ENCODE measurements at regions of chr2 and their contacts with region 1.

Region 1: DNA sequence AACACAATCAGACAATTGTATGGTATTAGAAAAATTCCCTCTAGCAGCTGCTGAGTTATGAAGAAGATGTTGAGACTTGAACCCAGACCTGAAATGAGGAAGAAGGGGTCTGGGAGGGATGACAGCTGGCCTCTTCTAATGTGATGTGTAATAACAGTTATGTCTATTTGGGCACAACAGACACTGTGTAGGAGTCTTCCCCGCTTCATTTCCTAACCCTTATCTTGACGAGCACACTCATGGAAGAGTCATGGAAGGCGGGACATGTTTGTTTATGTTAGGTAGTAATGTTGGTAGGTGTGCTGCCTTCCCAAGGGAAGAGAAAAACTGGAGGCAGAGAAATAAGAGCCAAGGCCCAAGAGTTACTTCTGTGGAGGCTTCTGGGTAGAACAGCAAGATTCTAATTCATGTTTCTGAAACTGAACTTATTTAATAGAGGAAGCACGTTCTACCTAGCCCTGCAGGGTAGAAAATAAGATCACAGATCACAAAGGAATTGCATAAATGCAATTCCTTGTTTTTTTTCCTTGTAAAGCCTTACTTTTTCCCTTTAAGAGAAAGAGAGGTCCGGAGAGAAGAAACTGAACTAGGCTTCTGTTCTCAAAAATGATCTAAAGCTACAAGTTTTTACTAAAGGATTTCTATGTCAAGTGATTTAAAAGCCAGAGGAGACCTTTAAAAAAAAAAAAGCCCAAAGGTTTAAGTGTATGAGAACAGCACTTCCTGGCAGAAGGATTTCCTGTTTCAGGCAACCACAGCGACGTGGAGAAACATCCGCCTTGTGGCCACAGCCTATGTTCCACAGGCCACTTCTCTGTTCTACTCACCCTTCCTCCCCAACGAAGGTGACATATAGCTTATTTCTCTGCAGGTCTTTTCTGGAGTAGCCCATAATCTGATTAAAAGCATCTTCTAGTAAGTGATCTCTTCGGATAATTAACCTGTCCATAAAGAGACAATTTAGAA is 68.5 kb upstream of the STK17B start:
- DNase-seq: peak; percentile 94
- H3K4me3 Mint-ChIP-seq: peak overlapping the region; percentile 36
- H3K27ac Mint-ChIP-seq: peak overlapping the region; percentile 87
- H3K4me1 Mint-ChIP-seq: peaks cover 84% of the 10 kb centered on the region
- H3K27me3 Mint-ChIP-seq: no peaks in the 10 kb centered on the region

Region 2: GRCh38 chr2:195543902-195544894 is 695.7 kb before region 1 on chr2:
- CTCF ChIA-PET with region 1: no interaction called
- POLR2A ChIA-PET with region 1: no interaction called
- intact Hi-C with region 1: loop called (anchors 5 kb)
- DNase-seq: peak; percentile 58
- H3K4me3 Mint-ChIP-seq: peak overlapping the region; percentile 23
- H3K27ac Mint-ChIP-seq: peak overlapping the region; percentile 91
- H3K4me1 Mint-ChIP-seq: peaks cover 57% of the 10 kb centered on the region
- H3K27me3 Mint-ChIP-seq: no peaks in the 10 kb centered on the region

Region 3: GRCh38 chr2:196160101-196160500 is 79.8 kb before region 1 on chr2:
- CTCF ChIA-PET with region 1: no interaction called
- POLR2A ChIA-PET with region 1: interaction called, 4 read pairs
- intact Hi-C with region 1: loop called (anchors 1 kb)
- DNase-seq: peak; percentile 76
- H3K4me3 Mint-ChIP-seq: peak overlapping the region; percentile 39
- H3K27ac Mint-ChIP-seq: peak overlapping the region; percentile 96
- H3K4me1 Mint-ChIP-seq: peaks cover 77% of the 10 kb centered on the region
- H3K27me3 Mint-ChIP-seq: no peaks in the 10 kb centered on the region

Region 4: GRCh38 chr2:196200557-196200956 is 39.3 kb before region 1 on chr2:
- CTCF ChIA-PET with region 1: interaction called, 4 read pairs
- POLR2A ChIA-PET with region 1: no interaction called
- intact Hi-C with region 1: loop called (anchors 1 kb)
- DNase-seq: peak; percentile 61
- H3K4me3 Mint-ChIP-seq: peak overlapping the region; percentile 64
- H3K27ac Mint-ChIP-seq: peak overlapping the region; percentile 82
- H3K4me1 Mint-ChIP-seq: peaks cover 52% of the 10 kb centered on the region
- H3K27me3 Mint-ChIP-seq: no peaks in the 10 kb centered on the region

Region 5: DNA sequence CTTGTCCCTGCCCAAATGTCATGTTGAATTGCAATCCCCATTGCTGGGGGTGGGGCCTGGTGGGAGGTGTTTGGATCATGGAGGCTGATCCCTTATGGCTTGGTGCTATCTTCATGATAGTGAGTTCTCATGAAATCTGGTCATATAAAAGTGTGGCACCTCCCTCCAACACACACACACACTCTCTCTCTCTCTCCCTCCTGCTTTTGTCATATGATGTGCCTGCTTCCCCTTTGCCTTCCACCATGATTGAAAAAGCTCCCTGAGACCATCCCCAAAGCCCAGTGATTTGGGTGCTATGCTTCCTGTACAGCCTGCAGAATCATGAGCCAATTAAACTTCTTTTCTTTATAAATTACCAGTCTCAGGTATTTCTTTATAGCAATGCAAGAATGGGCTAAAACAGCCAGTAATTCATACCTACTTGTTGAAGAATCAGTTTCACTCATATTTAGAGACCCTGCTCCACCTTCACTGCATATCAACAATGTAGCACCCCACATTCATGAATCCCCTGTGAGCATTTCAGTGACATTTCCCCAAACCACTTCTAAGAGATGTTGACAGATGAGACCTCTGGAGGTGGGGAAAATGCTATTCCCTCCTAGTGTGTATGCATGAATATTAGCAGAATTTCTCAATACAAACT is 13.7 kb before region 1 on chr2:
- CTCF ChIA-PET with region 1: no interaction called
- POLR2A ChIA-PET with region 1: interaction called, 3 read pairs
- intact Hi-C with region 1: loop called (anchors 1 kb)
- DNase-seq: no peak
- H3K4me3 Mint-ChIP-seq: no peak overlapping the region
- H3K27ac Mint-ChIP-seq: peak overlapping the region; percentile 5
- H3K4me1 Mint-ChIP-seq: peaks cover 74% of the 10 kb centered on the region
- H3K27me3 Mint-ChIP-seq: no peaks in the 10 kb centered on the region

Region 6: DNA sequence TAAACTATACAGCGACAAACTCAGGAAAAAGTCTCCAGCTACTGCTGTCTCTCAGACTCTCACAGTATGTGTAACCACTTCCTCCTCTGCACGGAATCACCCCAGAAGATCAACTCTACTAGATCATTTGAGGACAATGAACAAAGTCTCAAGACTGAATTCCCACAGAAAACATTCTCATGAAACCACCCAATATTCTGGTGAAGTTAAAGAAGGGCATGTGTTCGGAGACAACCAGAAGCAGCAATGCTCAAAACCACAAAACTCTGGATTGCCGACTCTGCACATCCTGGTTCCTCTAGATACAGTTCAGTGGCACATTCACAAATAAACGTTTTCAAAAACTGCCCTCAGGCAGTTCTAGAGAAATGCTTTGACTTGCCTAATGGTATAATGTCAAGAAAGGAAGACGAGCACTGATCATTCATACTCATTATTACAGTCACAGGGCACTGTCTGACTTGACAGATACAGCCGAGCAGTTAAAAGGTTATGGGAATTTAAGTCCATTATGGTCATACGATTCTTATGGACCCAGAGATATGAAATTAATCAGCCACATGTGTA is 23.4 kb after region 1 on chr2:
- CTCF ChIA-PET with region 1: interaction called, 22 read pairs
- POLR2A ChIA-PET with region 1: interaction called, 37 read pairs
- intact Hi-C with region 1: loop called (anchors 1 kb)
- DNase-seq: peak; percentile 62
- H3K4me3 Mint-ChIP-seq: peak overlapping the region; percentile 75
- H3K27ac Mint-ChIP-seq: peak overlapping the region; percentile 99
- H3K4me1 Mint-ChIP-seq: peaks cover 77% of the 10 kb centered on the region
- H3K27me3 Mint-ChIP-seq: no peaks in the 10 kb centered on the region

Region 7: GRCh38 chr2:196286821-196287220 is 46.9 kb after region 1 on chr2:
- CTCF ChIA-PET with region 1: no interaction called
- POLR2A ChIA-PET with region 1: interaction called, 3 read pairs
- intact Hi-C with region 1: loop called (anchors 1 kb)
- DNase-seq: no peak
- H3K4me3 Mint-ChIP-seq: no peak overlapping the region
- H3K27ac Mint-ChIP-seq: no peak overlapping the region
- H3K4me1 Mint-ChIP-seq: peaks cover 72% of the 10 kb centered on the region
- H3K27me3 Mint-ChIP-seq: no peaks in the 10 kb centered on the region